WTC11 (cell line): ENCODE measurements at regions of chr2 and their contacts with region 1.

Region 1: DNA sequence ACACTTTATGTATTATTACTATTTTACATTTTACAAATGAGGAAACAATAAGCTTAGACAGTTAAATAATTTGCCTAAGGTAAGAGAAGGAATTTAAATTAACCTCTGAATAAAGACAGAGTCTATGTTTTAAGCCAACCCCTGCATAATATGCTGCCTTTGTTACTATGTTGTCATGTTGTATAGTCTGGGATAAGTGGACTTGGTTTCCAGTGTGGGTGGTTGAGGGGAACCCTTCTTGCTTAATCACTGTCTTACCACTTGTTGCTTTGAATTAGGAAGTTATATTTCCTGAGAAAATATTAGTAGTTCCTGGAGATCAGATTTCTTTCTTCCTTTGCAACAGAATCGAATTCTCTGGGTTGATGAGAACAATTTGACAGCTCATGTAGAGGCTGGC is 52.6 kb downstream of the AGPS start:
- DNase-seq: no peak
- ATAC-seq: no peak
- H3K4me3 Mint-ChIP-seq: no peak overlapping the region
- H3K27ac Mint-ChIP-seq: no peak overlapping the region
- H3K4me1 Mint-ChIP-seq: no peaks in the 10 kb centered on the region
- H3K27me3 Mint-ChIP-seq: no peaks in the 10 kb centered on the region
- CTCF ChIP-seq: no peak

Region 2: GRCh38 chr2:177325270-177325929 is 119.8 kb before region 1 on chr2:
- CTCF ChIA-PET with region 1: no interaction called
- POLR2A ChIA-PET with region 1: no interaction called
- DNase-seq: no peak
- ATAC-seq: no peak
- H3K4me3 Mint-ChIP-seq: no peak overlapping the region
- H3K27ac Mint-ChIP-seq: no peak overlapping the region
- H3K4me1 Mint-ChIP-seq: peaks cover 12% of the 10 kb centered on the region
- H3K27me3 Mint-ChIP-seq: no peaks in the 10 kb centered on the region; the same call in 1 of the 2 replicates
- CTCF ChIP-seq: no peak

Region 3: DNA sequence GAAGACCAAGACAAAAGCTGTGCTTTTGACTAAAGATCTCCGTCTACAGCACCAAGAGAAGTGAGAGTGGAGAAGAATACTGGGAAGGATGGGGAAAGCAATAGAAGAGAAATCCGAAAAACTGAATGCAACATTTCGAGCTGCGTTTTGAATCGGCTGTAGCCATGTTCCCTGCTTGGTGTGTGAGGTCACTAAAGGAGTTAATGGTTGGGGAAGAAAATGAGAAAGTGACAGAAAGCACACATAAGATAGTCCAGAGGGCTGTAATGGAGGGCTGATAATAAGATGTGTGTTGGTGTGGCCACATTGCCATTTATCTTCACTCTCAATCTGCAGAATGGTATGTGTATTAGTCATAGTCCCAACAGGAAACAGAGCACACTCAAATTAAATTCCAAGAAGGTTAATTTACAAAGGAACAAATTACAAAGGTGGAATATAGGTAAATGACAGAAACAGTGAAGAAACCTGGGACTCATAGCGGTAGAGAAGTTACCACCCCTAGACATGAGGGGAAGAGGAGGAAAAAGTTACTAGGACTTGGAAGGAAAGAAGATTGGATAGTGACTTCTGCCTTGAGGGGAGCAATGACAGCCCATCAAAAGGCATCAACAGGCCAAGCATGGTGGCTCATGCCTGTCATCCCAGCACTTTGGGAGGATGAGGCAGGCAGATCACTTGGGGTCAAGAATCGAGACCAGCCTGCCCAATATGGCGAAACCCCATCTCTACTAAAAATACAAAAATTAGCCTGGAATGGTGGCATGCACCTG is 629.6 kb after region 1 on chr2:
- CTCF ChIA-PET with region 1: no interaction called
- POLR2A ChIA-PET with region 1: interaction called, 11 read pairs
- DNase-seq: no peak
- ATAC-seq: no peak
- H3K4me3 Mint-ChIP-seq: no peak overlapping the region
- H3K27ac Mint-ChIP-seq: no peak overlapping the region
- H3K4me1 Mint-ChIP-seq: peaks cover 16% of the 10 kb centered on the region
- H3K27me3 Mint-ChIP-seq: peaks cover 47% of the 10 kb centered on the region
- CTCF ChIP-seq: no peak